B cell (primary cell): ENCODE measurements at regions of chr4 and their contacts with region 1.

Region 1: DNA sequence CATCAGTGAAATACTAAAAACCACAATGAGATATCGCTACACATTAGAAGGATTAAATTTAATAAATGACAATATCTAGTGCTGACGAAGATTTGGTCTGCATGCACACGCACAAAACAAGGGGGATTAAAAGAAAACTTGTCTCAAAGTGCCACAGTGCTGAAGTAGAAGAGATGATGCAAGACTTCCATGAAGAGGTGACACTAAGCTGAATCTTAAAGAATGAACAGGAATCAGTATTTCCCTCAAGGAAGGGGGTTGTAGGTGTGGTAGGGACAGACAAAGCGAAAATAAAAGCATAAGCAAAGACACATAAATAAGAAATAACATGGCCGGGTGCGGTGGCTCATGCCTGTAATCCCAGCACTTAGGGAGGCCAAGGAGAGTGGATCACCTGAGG is 33.5 kb downstream of the CNOT6L start:
- DNase-seq: no peak
- ATAC-seq: no peak
- H3K4me3 ChIP-seq: no peak overlapping the region
- H3K4me3 Mint-ChIP-seq: no peak overlapping the region
- H3K27ac ChIP-seq: no peak overlapping the region
- H3K27ac Mint-ChIP-seq: no peak overlapping the region
- H3K4me1 ChIP-seq: peaks cover 4 to 9% of the 10 kb centered on the region in 2 donors
- H3K4me1 Mint-ChIP-seq: peaks cover 56% of the 10 kb centered on the region
- H3K27me3 ChIP-seq: no peaks in the 10 kb centered on the region
- H3K27me3 Mint-ChIP-seq: no peaks in the 10 kb centered on the region
- CTCF ChIP-seq: no peak

Region 2: DNA sequence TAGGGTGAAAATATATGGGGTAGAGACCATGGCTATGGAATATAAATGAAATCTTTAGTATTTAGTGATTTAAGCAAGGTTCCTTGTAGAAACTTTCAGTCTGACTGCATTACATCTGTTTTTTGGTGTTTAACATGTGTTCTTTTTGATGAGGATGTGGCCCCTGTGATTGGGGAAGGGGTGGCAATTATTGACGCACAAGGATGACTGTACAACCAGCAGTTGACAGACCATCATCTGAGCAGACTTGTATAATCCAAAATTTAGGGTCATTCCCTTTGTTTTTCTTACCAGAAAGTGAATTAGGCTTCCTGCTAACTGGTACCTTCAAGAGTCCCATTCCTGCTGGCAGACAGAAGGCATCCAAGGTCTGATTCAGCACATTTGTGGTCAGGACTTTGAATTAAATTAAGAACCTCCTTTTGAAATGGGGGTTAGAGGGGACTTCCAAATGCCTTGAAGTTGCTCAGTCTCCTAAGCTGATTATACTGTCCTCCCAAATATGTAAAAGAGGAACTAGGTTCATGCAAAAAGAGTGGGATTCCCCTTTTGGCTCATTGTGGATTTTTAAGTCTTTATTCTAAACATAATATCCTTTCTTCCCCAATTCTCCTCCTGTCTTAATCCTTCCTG is 292.4 kb before region 1 on chr4:
- CTCF ChIA-PET with region 1: no interaction called
- POLR2A ChIA-PET with region 1: no interaction called
- intact Hi-C with region 1: no loop called
- DNase-seq: peak; percentile 44
- ATAC-seq: peak; percentile 65
- H3K4me3 ChIP-seq: no peak overlapping the region
- H3K4me3 Mint-ChIP-seq: peak overlapping the region; percentile 56
- H3K27ac ChIP-seq: no peak overlapping the region
- H3K27ac Mint-ChIP-seq: peak overlapping the region; percentile 57
- H3K4me1 ChIP-seq: peaks cover 8 to 12% of the 10 kb centered on the region in 2 donors
- H3K4me1 Mint-ChIP-seq: peaks cover 22% of the 10 kb centered on the region
- H3K27me3 ChIP-seq: peaks cover 0 to 2% (median 0%) of the 10 kb centered on the region in 4 experiments
- H3K27me3 Mint-ChIP-seq: no peaks in the 10 kb centered on the region
- CTCF ChIP-seq: no peak

Region 3: DNA sequence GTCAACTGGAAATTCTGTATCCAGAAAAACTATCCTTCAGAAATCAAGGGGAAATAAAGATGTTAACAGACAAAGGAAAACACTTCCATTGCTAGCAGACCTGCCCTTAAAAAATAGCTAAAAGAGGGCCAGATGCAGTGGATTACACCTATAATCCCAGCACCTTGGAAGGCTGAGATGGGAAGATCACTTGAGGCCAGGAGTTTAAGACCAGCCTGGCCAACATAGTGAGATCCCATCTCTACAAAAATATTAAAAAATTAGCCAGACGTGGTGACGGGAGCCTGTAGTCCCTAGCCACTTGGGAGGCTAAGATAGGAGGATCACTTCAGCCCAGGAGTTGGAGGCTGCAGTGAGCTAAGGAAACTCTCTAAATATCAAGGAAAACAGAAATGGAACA is 33.9 kb before region 1 on chr4:
- CTCF ChIA-PET with region 1: no interaction called
- POLR2A ChIA-PET with region 1: no interaction called
- intact Hi-C with region 1: loop called (anchors 5 kb)
- DNase-seq: no peak
- ATAC-seq: no peak
- H3K4me3 ChIP-seq: no peak overlapping the region
- H3K4me3 Mint-ChIP-seq: no peak overlapping the region
- H3K27ac ChIP-seq: no peak overlapping the region
- H3K27ac Mint-ChIP-seq: no peak overlapping the region
- H3K4me1 ChIP-seq: no peaks in the 10 kb centered on the region
- H3K4me1 Mint-ChIP-seq: peaks cover 2% of the 10 kb centered on the region
- H3K27me3 ChIP-seq: no peaks in the 10 kb centered on the region
- H3K27me3 Mint-ChIP-seq: no peaks in the 10 kb centered on the region
- CTCF ChIP-seq: no peak